Upper lobe of right lung (tissue), 1 donor: ENCODE measurements at regions of chr7 and their contacts with region 1.

Region 1: DNA sequence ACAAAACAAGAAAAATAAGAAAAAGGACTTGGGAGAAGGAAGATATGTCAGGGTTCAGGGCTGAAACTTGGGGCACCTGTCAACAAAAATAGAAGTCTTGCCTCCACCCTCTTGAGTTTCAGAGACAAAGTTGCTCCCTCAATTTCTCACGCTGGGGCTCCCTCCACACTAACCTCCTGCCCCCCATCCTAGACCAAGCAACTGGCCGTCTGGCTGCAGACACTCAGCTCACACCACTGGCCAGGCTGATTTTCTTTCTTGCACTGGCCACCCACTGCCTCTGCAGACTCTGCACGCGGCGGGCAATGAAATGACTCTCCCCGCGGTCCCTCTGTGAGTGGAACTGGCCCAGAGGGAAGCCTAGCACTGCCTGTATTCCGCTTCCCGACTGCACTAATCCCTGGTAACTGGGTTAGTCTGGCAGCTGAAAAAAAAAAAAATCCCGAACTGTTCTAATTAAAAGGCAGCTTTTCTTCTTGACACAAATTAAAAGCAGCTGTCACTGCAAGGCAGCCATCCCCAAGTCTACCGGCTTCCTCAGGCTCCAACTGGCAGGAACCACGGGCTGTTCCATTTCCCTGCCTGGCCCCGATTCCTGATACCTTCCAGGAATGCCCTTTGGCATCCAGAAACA is 83.5 kb downstream of the SPDYE5 start:
- DNase-seq: no peak
- ATAC-seq: no peak
- H3K4me3 ChIP-seq: no peak overlapping the region
- H3K27ac ChIP-seq: no peak overlapping the region
- H3K4me1 ChIP-seq: no peaks in the 10 kb centered on the region
- H3K27me3 ChIP-seq: no peaks in the 10 kb centered on the region
- CTCF ChIP-seq: no peak

Region 2: GRCh38 chr7:75762314-75762917 is 186.8 kb after region 1 on chr7:
- intact Hi-C with region 1: loop called (anchors 10 kb)
- DNase-seq: no peak
- ATAC-seq: peak; percentile 94
- H3K4me3 ChIP-seq: no peak overlapping the region
- H3K27ac ChIP-seq: no peak overlapping the region
- H3K4me1 ChIP-seq: no peaks in the 10 kb centered on the region
- H3K27me3 ChIP-seq: no peaks in the 10 kb centered on the region
- CTCF ChIP-seq: peak; percentile 76